Brain microvascular endothelial cell (primary cell): ENCODE measurements at regions of chr11 and their contacts with region 1.

Region 1: GRCh38 chr11:33857933-33858371 is 33.9 kb downstream of the LMO2 start:
- DNase-seq: peak; percentile 57
- H3K4me3 ChIP-seq: no peak overlapping the region
- H3K27ac ChIP-seq: no peak overlapping the region
- H3K27me3 ChIP-seq: no peaks in the 10 kb centered on the region
- CTCF ChIP-seq: peak; percentile 95

Region 2: DNA sequence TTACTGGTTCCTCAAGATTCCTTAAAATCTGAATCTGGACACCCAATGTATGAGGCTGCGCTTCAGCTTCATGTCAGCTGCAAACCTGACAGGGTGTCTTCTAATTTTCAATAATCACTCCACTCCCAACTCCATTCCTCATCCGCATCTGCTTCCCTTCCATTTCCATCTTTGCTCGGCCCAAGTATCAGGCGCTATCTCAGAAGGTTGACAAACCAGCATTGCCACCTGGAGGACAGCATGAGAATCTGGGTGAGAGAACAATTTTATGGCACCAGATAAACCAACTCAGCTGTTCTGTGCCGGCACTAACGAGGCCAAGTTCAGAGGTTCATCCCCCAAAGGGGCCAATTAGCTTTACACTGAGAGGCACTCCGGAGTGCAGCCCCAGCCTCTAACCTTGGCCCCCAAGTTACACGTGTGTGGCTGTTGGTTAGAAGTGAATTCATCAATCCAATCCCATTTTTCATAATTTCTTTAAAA is 113.1 kb after region 1 on chr11:
- in situ Hi-C with region 1: loop called (anchors 10 kb)
- DNase-seq: peak; percentile 47
- H3K4me3 ChIP-seq: no peak overlapping the region
- H3K27ac ChIP-seq: no peak overlapping the region
- H3K27me3 ChIP-seq: no peaks in the 10 kb centered on the region
- CTCF ChIP-seq: peak; percentile 86

Region 3: GRCh38 chr11:34021977-34022735 is 164.2 kb after region 1 on chr11:
- in situ Hi-C with region 1: no loop called
- DNase-seq: no peak
- H3K4me3 ChIP-seq: no peak overlapping the region
- H3K27ac ChIP-seq: no peak overlapping the region
- H3K27me3 ChIP-seq: no peaks in the 10 kb centered on the region
- CTCF ChIP-seq: no peak